Motor neuron (in vitro differentiated cells): ENCODE measurements at regions of chr12 and their contacts with region 1.

Region 1: GRCh38 chr12:50637870-50638481 is 125.9 kb upstream of the ATF1 start:
- ATAC-seq: peak in 3 of 8 experiments; percentile 20 to 44 (median 37)
- H3K4me3 ChIP-seq: no peak overlapping the region
- H3K27ac ChIP-seq: no peak overlapping the region
- H3K4me1 ChIP-seq: peaks cover 0 to 4% of the 10 kb centered on the region in 2 donors

Region 2: DNA sequence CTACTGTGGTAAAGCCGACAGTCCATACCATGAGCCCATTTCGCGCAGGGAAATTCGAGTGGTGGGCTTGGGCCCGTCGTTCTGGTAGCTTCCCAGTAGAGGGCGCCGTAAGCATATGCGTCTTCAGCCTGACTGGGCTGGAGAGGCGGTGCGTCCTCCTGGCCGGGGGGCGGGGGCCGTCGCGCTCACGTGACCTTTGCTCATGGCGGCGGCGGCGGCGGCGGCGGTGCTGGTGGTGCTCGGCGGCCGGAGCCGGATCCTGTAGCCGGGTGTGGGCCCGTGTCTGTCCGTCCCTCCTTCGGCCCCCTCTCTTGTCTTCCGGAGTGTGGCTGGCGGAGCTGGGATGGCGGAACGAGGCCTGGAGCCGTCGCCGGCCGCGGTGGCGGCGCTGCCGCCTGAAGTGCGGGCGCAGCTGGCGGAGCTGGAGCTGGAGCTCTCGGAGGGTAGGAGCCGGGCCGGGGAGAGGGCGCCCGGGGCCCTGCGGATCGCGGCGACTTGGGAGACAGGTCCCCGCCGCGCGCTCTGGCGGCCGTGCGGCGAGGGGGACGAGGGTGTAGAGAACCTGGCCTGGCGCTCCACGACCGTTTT is 133.1 kb before region 1 on chr12 and contains the start of gene DIP2B:
- in situ Hi-C with region 1: loop called in 7 of 9 experiments (anchors 10 to 25 kb)
- ATAC-seq: peak; percentile 63 to 90 (median 82)
- H3K4me3 ChIP-seq: peak within 1 kb of the TSS; percentile 64 to 99 (median 98)
- H3K27ac ChIP-seq: peak within 1 kb of the TSS; percentile 89 to 95
- H3K4me1 ChIP-seq: peaks cover 23 to 36% of the 10 kb centered on the region in 2 donors
- total RNA-seq, gene DIP2B: 20.8 to 68.6 (median 29.9) TPM